Mammary epithelial cell (primary cell): ENCODE measurements at regions of chr6 and their contacts with region 1.

Region 1: DNA sequence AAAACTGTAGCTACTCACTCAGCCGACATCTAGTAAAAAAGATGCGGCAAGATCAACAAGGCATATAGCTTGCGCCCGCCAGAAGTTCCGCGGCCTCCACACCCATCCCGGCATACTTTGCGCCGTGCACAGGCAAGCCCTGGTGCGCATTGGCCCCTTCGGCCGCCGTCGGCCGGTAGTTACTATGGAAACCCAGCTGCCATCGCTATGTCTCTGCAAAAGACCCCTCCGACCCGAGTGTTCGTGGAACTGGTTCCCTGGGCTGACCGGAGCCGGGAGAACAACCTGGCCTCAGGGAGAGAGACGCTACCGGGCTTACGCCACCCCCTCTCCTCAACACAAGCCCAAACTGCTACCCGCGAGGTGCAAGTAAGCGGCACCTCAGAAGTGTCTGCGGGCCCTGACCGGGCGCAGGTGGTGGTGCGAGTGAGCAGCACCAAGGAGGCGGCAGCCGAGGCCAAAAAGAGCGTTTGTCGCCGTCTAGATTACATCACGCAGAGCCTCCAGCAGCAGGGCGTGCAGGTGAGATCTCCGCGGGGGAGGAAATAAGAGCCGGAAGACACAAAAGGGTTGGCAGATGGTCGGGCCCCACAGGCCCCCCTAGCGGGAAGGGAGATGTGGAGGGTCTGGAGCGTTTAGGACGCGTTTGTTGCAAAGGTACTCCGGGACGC is at the start of gene IRAK1BP1:
- DNase-seq: peak; percentile 77
- H3K4me3 ChIP-seq: peak within 1 kb of the TSS; percentile 68 to 83 (median 72)
- H3K27ac ChIP-seq: peak within 1 kb of the TSS; percentile 76
- H3K4me1 ChIP-seq: peaks cover 3% of the 10 kb centered on the region
- H3K27me3 ChIP-seq: no peaks in the 10 kb centered on the region
- CTCF ChIP-seq: peak in 1 of 2 donors; percentile 2
- total RNA-seq, gene IRAK1BP1: 6.2 to 8.0 TPM

Region 2: GRCh38 chr6:78916411-78916810 is 48.9 kb after region 1 on chr6:
- CTCF ChIA-PET with region 1: no interaction called
- dilution Hi-C with region 1: no loop called
- in situ Hi-C with region 1: no loop called
- intact Hi-C with region 1: loop called (anchors 2 kb)
- DNase-seq: peak; percentile 90
- H3K4me3 ChIP-seq: no peak overlapping the region
- H3K27ac ChIP-seq: no peak overlapping the region
- H3K4me1 ChIP-seq: peaks cover 6% of the 10 kb centered on the region
- H3K27me3 ChIP-seq: no peaks in the 10 kb centered on the region
- CTCF ChIP-seq: no peak

Region 3: DNA sequence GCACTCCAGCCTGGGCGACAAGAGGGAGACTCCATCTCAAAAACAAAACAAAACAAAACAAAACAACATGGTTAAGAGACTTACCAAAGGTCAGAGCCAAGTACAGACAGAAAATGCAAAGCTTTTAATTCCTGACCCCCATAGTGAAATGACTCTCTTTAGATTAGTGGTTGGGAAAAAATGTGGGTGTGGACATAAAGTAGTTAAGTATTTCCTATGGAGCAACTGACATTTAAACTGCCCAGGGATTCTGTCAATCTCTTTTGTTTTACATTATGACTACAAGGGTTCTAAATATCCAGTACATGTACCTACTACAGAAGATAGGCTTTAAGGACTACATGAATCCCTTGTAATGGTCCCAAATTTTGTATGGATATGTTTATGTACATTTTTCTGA is 74.9 kb after region 1 on chr6:
- CTCF ChIA-PET with region 1: no interaction called
- dilution Hi-C with region 1: no loop called
- in situ Hi-C with region 1: no loop called
- intact Hi-C with region 1: loop called (anchors 5 kb)
- DNase-seq: no peak
- H3K4me3 ChIP-seq: no peak overlapping the region
- H3K27ac ChIP-seq: no peak overlapping the region
- H3K4me1 ChIP-seq: no peaks in the 10 kb centered on the region
- H3K27me3 ChIP-seq: no peaks in the 10 kb centered on the region
- CTCF ChIP-seq: no peak